ENCODE measurements at regions of chr6 and their contacts with region 1.

Region 1: DNA sequence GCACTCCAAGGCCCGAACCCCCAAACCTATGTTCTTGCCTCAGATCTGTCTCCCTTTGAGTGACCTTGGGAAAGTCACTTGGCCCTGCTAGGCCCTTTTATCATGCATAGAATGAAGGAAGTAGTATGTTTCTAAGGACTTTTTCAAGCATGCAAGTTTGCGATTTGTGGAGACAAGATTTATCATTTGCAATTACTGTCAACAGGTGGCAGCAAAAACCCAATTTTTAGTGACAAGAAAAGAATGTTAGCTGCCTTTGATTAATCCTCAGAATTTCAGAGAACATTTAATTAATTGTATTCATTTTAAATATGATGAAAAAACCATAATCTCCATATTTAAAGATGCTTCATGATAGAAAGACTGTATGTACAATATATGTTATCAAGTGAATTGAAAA is 28.3 kb upstream of the PREP start:
- DNase-seq: no peak
- ATAC-seq: no peak

Region 2: GRCh38 chr6:106223300-106223930 is 792.2 kb after region 1 on chr6:
- intact Hi-C with region 1: loop called (anchors 5 kb)
- DNase-seq: no peak
- ATAC-seq: no peak

Region 3: GRCh38 chr6:106300944-106301343 is 869.7 kb after region 1 on chr6:
- intact Hi-C with region 1: loop called (anchors 10 kb)
- DNase-seq: no peak
- ATAC-seq: no peak